H1 (cell line): ENCODE measurements at regions of chr15 and their contacts with region 1.

Region 1: DNA sequence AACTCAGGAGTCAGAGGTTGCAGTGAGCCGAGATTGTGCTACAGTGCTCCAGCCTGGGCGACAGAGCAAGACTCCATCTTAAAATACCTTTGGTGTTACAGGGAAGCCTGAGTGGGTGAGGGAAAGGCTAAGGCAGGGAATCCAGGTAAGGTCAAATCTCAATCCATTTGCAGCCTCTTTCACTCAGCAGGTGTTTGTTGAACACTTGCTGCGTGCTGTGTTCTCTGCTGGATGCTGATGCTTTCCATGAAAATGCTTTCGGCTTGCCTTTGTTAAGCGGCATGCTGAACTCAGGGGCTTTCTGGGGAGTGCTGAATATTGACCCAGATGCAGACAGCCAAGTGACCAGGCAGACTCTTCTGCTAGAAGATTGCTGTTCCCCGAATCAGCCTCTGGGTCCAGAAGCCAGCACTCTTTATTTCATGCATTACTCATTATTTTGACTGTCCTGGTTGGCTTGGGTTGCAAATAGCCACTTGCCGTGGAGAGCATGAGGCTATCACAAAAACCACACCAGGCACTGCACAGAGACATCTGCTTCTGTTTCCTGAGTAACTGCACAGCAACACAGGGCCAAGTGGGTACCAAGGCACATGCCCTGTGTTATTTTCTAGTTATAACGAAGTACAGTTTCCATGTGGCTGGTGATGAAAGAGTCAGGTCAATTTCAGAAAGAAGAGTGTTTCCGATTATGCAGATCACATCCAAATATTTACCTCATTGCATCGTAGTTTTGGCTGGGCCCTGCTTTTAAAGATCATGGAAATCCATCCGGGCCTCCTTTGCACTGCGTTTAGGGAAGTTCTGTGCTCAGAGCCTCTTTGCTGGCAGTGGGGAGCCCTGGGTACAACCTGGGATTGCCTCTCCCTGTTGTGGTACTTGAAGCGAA is 88.6 kb downstream of the THSD4 start:
- DNase-seq: peak; percentile 77 to 84
- H3K4me3 ChIP-seq: peak overlapping the region in 1 of 4 experiments; percentile 23; a peak in 1 of 8 replicates
- H3K27ac ChIP-seq: no peak overlapping the region; the same call in 1 of the 2 replicates
- H3K4me1 ChIP-seq: peaks cover 19 to 34% (median 28%) of the 10 kb centered on the region in 4 experiments
- H3K27me3 ChIP-seq: peaks cover 0 to 4% (median 0%) of the 10 kb centered on the region in 4 experiments; a peak in 1 of 7 replicates
- CTCF ChIP-seq: no peak
- EP300 ChIP-seq: peak in 1 of 2 experiments; percentile 98; a peak in 2 of 3 replicates
- POLR2A ChIP-seq: no peak
- RAD21 ChIP-seq: peak in 1 of 2 experiments; percentile 37; a peak in 2 of 4 replicates

Region 2: GRCh38 chr15:71215126-71215894 is 11.5 kb after region 1 on chr15:
- CTCF ChIA-PET with region 1: interaction called, 3 read pairs
- POLR2A ChIA-PET with region 1: interaction called, 11 read pairs
- DNase-seq: peak in 1 of 2 experiments; percentile 60
- H3K4me3 ChIP-seq: no peak overlapping the region
- H3K27ac ChIP-seq: no peak overlapping the region
- H3K4me1 ChIP-seq: peaks cover 0 to 3% (median 1%) of the 10 kb centered on the region in 4 experiments; a peak in 3 of 7 replicates
- H3K27me3 ChIP-seq: peaks cover 0 to 18% (median 8%) of the 10 kb centered on the region in 4 experiments; a peak in 6 of 7 replicates
- CTCF ChIP-seq: no peak
- EP300 ChIP-seq: no peak
- POLR2A ChIP-seq: no peak
- RAD21 ChIP-seq: no peak